Esophagus muscularis mucosa (tissue), 4 donors: ENCODE measurements at regions of chr17 and their contacts with region 1.

Region 1: DNA sequence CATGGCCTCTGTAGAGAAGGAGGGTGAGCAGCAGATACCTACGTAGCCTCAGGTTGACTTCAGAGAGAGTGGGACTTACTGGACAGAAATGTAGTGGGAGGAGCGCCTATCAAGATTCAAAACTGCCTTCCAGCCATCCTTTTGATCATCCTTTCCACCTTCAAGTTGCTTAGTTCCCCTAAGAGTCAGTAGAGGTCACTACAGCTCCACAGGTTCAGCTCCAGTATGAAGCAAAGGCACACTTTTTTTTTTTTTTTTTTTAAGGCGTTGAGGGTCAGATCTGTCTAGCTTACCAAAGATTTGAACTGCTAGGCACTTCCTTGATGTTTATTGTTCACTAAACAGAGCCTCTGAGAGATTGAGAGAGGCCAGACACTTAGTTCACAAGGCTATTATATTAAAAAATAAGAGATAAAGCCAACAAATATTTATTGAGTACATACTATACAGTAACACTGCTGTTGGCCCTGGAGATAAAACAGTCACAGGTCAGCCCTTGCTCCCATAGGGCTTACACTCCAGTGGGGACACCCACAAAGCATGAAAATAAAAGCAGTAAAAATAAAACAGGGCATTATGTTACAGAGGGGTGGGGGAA is 3.1 kb downstream of the RNF227 start:
- DNase-seq: no peak
- H3K4me3 ChIP-seq: no peak overlapping the region
- H3K27ac ChIP-seq: no peak overlapping the region
- H3K4me1 ChIP-seq: peaks cover 24 to 29% (median 27%) of the 10 kb centered on the region in 4 donors
- H3K27me3 ChIP-seq: no peaks in the 10 kb centered on the region
- CTCF ChIP-seq: peak; percentile 66 to 83 (median 71)
- EP300 ChIP-seq: no peak
- POLR2A ChIP-seq: no peak

Region 2: DNA sequence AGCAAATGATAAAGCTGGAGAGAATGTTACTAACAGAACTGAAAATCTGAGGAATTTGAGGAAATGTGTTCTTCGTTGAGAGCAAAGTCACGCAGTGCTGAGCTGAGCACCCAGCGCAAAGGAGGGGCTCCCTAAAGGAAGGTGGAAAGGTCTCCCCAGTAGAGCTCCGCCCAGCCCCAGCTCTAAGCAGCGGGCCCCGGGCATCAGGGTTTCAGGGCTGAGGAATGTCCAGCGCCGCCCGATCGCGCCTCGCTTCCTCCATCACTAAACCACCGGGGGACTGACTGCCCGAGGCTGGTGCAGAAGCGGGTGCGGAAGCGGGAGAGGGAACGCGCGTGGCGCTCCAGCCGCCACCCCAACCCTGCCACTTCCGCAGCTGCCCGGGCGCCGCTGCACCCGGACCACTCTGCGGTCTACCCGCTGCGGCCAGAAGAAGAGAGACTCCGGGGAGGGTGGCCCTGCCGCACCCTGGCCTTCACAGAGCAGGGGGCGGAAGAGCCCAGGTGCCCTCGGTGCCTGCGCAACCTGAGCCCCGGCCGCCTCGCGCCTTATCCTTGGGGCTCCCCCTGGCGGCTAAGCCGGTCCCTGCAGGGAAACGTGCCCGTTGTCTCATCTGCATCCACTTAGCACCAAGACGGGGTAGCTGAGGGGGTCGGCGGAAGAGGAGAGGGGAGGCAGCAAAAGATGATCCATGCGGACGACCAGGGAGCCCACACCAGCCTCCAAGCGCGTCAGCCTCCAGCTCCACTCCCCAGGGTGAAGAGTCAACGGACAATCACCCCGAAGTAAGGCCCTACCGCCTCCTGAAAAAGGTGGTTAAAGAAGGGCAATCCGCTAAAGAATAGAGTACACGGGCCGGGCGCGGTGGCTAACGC is 77.0 kb after region 1 on chr17:
- intact Hi-C with region 1: loop called (anchors 2 kb)
- DNase-seq: peak; percentile 95
- H3K4me3 ChIP-seq: peak overlapping the region; percentile 57 to 79 (median 62)
- H3K27ac ChIP-seq: peak overlapping the region; percentile 21 to 68 (median 36)
- H3K4me1 ChIP-seq: peaks cover 7 to 13% (median 11%) of the 10 kb centered on the region in 4 donors
- H3K27me3 ChIP-seq: no peaks in the 10 kb centered on the region
- CTCF ChIP-seq: peak; percentile 90 to 99 (median 96)
- EP300 ChIP-seq: no peak
- POLR2A ChIP-seq: no peak